ENCODE measurements at regions of chr6 and their contacts with region 1.

Region 1: GRCh38 chr6:39203852-39204375 is 25.4 kb downstream of the KCNK5 start:
- DNase-seq: no peak
- H3K4me3 ChIP-seq: 0 out of 8 replicates have a peak overlapping the region, but pooled peaks of 1 of the 4 experiments have one; percentile 14
- H3K27ac ChIP-seq: peak overlapping the region; percentile 77; the same call in 1 of the 2 replicates
- H3K4me1 ChIP-seq: peaks cover 32 to 61% (median 43%) of the 10 kb centered on the region in 4 experiments
- H3K27me3 ChIP-seq: no peaks in the 10 kb centered on the region
- CTCF ChIP-seq: no peak
- EP300 ChIP-seq: no peak
- POLR2A ChIP-seq: no peak
- RAD21 ChIP-seq: no peak

Region 2: DNA sequence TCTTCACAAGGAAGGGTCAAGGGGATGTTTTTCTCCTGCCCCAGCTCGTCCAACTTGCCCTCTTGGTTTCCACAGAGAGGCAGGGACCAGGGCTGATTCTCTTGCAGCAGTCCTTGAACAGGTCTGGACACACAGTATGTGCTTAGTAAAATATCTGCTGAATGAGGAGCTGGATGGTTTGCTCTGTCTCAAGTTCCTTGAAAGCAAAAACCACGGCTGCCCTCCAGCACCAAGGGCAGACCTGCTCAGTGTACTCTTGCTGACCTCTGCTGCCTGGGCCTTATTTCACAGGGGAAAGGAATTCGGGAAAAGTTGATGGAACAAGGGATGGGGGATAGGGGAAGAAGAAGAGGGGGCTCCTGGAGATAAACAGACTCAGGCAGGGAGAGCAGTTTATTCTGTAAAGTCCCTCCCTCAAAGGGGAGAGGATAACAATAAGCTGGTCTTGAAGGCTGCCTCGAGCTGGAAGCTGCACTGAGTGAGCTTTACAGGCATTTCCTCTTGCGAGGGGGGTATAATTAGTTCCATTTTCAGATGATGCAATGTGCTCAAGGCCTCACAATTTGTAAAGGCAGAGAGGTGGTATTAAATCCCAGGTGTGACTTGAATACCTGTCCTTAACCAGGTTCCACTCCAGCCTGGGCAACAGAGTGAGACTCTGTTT is 15.1 kb after region 1 on chr6:
- CTCF ChIA-PET with region 1: interaction called, 836 read pairs
- POLR2A ChIA-PET with region 1: interaction called, 13 read pairs
- DNase-seq: no peak
- H3K4me3 ChIP-seq: no peak overlapping the region
- H3K27ac ChIP-seq: no peak overlapping the region
- H3K4me1 ChIP-seq: peaks cover 7 to 30% (median 16%) of the 10 kb centered on the region in 4 experiments
- H3K27me3 ChIP-seq: no peaks in the 10 kb centered on the region
- CTCF ChIP-seq: peak in 1 of 3 experiments; percentile 10; a peak in 1 of 4 replicates
- EP300 ChIP-seq: no peak
- POLR2A ChIP-seq: no peak
- RAD21 ChIP-seq: peak; percentile 10 to 48; a peak in 3 of 4 replicates